Naive thymus-derived CD4-positive, alpha-beta T cell (primary cell): ENCODE measurements at regions of chr7 and their contacts with region 1.

Region 1: DNA sequence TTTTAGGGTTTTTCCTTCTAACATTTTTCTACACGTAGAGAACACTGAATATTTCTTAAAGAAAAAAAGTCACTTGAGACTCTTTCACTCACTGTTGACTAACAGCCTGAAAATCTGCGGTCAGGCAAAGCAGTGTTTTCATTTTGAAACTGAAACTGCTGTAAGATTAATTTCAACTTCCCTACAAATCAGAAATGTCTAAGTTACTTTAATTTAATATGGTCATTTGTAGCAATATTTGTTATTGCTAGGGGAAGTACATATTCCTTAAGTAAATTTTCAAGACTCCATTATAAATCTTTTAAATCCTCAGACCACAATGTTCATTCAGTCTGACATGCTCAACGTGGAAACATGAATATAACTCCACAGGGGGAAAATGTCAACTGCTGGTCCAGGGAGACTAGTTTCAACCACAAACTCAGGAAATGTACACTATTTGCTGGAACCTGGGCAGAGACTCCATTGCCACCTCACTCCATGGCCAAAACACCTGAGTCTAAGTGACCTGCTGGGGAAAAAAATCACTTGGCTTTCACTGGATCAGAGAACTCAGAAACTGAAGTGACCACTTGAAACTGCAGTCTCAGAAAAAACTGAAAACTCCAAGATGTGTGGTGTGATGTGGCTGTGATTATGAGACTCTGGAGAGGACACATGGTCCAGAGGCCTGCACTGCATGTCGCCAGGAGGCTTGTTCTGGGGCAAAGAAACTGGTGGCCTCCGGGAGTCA is 161.2 kb downstream of the TAX1BP1 start:
- DNase-seq: peak in 4 of 9 donors; percentile 7 to 50 (median 29)
- ATAC-seq: peak; percentile 83
- H3K4me3 ChIP-seq: peak overlapping the region; percentile 14
- H3K4me3 Mint-ChIP-seq: peak overlapping the region; percentile 26 to 75 (median 66)
- H3K27ac ChIP-seq: no peak overlapping the region
- H3K27ac Mint-ChIP-seq: peak overlapping the region; percentile 56 to 85 (median 61)
- H3K4me1 ChIP-seq: peaks cover 5 to 8% of the 10 kb centered on the region in 2 donors
- H3K4me1 Mint-ChIP-seq: peaks cover 26 to 57% (median 33%) of the 10 kb centered on the region in 7 donors
- H3K27me3 ChIP-seq: no peaks in the 10 kb centered on the region
- H3K27me3 Mint-ChIP-seq: peaks cover 0 to 7% (median 0%) of the 10 kb centered on the region in 5 donors

Region 2: GRCh38 chr7:27593226-27593625 is 308.0 kb before region 1 on chr7:
- CTCF ChIA-PET with region 1: no interaction called
- POLR2A ChIA-PET with region 1: no interaction called
- intact Hi-C with region 1: no loop called
- DNase-seq: no peak
- ATAC-seq: no peak
- H3K4me3 ChIP-seq: no peak overlapping the region
- H3K4me3 Mint-ChIP-seq: no peak overlapping the region
- H3K27ac ChIP-seq: no peak overlapping the region
- H3K27ac Mint-ChIP-seq: no peak overlapping the region
- H3K4me1 ChIP-seq: no peaks in the 10 kb centered on the region
- H3K4me1 Mint-ChIP-seq: no peaks in the 10 kb centered on the region
- H3K27me3 ChIP-seq: no peaks in the 10 kb centered on the region
- H3K27me3 Mint-ChIP-seq: no peaks in the 10 kb centered on the region

Region 3: GRCh38 chr7:27745064-27745583 is 156.1 kb before region 1 on chr7:
- CTCF ChIA-PET with region 1: no interaction called
- POLR2A ChIA-PET with region 1: no interaction called
- intact Hi-C with region 1: loop called in 1 of 2 experiments (anchors 1 kb)
- DNase-seq: peak in 4 of 9 donors; percentile 5 to 14 (median 9)
- ATAC-seq: no peak
- H3K4me3 ChIP-seq: no peak overlapping the region
- H3K4me3 Mint-ChIP-seq: peak overlapping the region in 5 of 10 donors; percentile 26 to 58 (median 54)
- H3K27ac ChIP-seq: no peak overlapping the region
- H3K27ac Mint-ChIP-seq: no peak overlapping the region
- H3K4me1 ChIP-seq: peaks cover 18 to 23% of the 10 kb centered on the region in 2 donors
- H3K4me1 Mint-ChIP-seq: peaks cover 35 to 81% (median 66%) of the 10 kb centered on the region in 7 donors
- H3K27me3 ChIP-seq: no peaks in the 10 kb centered on the region
- H3K27me3 Mint-ChIP-seq: no peaks in the 10 kb centered on the region

Region 4: DNA sequence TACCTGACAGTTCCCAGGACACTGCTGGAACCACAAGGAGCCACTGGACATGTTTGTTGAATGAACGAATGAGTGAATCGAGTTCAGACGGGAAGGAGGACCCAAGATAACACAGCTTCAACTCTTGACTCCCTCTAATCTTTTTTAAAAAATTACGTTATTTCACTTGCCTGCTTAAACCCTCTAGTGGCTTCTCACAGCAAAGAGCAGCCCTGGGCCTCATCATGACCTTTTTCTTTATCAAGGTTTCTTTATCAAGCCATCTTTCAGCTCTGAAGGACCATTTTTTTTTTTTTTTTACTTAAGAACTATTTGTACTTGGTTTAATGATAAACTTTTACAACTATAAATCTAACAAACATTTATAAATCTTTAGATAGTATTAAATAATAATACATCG is 50.7 kb before region 1 on chr7:
- CTCF ChIA-PET with region 1: no interaction called
- POLR2A ChIA-PET with region 1: no interaction called
- intact Hi-C with region 1: loop called in 1 of 2 experiments (anchors 5 kb)
- DNase-seq: no peak
- ATAC-seq: no peak
- H3K4me3 ChIP-seq: no peak overlapping the region
- H3K4me3 Mint-ChIP-seq: no peak overlapping the region
- H3K27ac ChIP-seq: no peak overlapping the region
- H3K27ac Mint-ChIP-seq: no peak overlapping the region
- H3K4me1 ChIP-seq: no peaks in the 10 kb centered on the region
- H3K4me1 Mint-ChIP-seq: peaks cover 0 to 2% (median 0%) of the 10 kb centered on the region in 7 donors
- H3K27me3 ChIP-seq: no peaks in the 10 kb centered on the region
- H3K27me3 Mint-ChIP-seq: peaks cover 0 to 2% (median 0%) of the 10 kb centered on the region in 5 donors

Region 5: GRCh38 chr7:27890205-27890849 is 10.9 kb before region 1 on chr7:
- CTCF ChIA-PET with region 1: no interaction called
- POLR2A ChIA-PET with region 1: no interaction called
- intact Hi-C with region 1: loop called in 1 of 2 experiments (anchors 1 kb)
- DNase-seq: no peak
- ATAC-seq: no peak
- H3K4me3 ChIP-seq: no peak overlapping the region
- H3K4me3 Mint-ChIP-seq: no peak overlapping the region
- H3K27ac ChIP-seq: no peak overlapping the region
- H3K27ac Mint-ChIP-seq: no peak overlapping the region
- H3K4me1 ChIP-seq: no peaks in the 10 kb centered on the region
- H3K4me1 Mint-ChIP-seq: peaks cover 0 to 9% (median 3%) of the 10 kb centered on the region in 7 donors
- H3K27me3 ChIP-seq: no peaks in the 10 kb centered on the region
- H3K27me3 Mint-ChIP-seq: peaks cover 0 to 10% (median 0%) of the 10 kb centered on the region in 5 donors

Region 6: DNA sequence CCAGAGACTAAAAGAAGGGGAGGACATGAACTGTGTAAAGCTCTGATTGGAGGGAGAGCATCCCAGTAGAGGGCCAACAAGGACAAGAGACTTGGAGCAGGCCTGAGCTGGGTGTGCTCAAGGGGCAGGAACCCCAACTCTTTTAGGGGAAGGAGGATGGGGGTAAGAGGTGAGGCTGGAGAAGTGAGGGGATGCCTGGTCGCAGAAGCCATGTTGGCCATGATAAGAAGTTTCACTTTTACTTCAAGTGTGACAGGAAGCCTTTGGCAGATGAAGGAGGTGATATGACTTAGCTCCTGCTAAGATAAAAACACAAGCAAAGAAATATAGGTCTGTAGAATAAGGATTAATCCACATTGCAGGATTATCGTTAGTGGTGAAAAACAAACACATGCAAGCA is 71.1 kb after region 1 on chr7:
- CTCF ChIA-PET with region 1: no interaction called
- POLR2A ChIA-PET with region 1: no interaction called
- intact Hi-C with region 1: loop called in 1 of 2 experiments (anchors 1 kb)
- DNase-seq: peak in 6 of 9 donors; percentile 23 to 54 (median 44)
- ATAC-seq: peak; percentile 72
- H3K4me3 ChIP-seq: peak overlapping the region; percentile 44
- H3K4me3 Mint-ChIP-seq: peak overlapping the region; percentile 72 to 89 (median 82)
- H3K27ac ChIP-seq: peak overlapping the region; percentile 2
- H3K27ac Mint-ChIP-seq: peak overlapping the region; percentile 44 to 92 (median 88)
- H3K4me1 ChIP-seq: peaks cover 0 to 16% of the 10 kb centered on the region in 2 donors
- H3K4me1 Mint-ChIP-seq: peaks cover 24 to 39% (median 35%) of the 10 kb centered on the region in 7 donors
- H3K27me3 ChIP-seq: no peaks in the 10 kb centered on the region
- H3K27me3 Mint-ChIP-seq: peaks cover 0 to 4% (median 0%) of the 10 kb centered on the region in 5 donors